ENCODE measurements at regions of chr1 and their contacts with region 1.

Region 1: GRCh38 chr1:193121616-193122593 is at the start of gene CDC73:
- DNase-seq: peak; percentile 97
- H3K4me3 ChIP-seq: peak within 1 kb of the TSS; percentile 77 to 96 (median 86)
- H3K27ac ChIP-seq: peak within 1 kb of the TSS; percentile 61
- H3K4me1 ChIP-seq: peaks cover 20% of the 10 kb centered on the region
- H3K27me3 ChIP-seq: no peaks in the 10 kb centered on the region
- CTCF ChIP-seq: peak; percentile 95 to 98
- POLR2A ChIP-seq: peak; percentile 70
- total RNA-seq, gene CDC73: 55.3 and 55.8 TPM in 2 replicates

Region 2: GRCh38 chr1:193059268-193060225 is 62.4 kb before region 1 on chr1 and contains the starts of genes RO60 and UCHL5:
- CTCF ChIA-PET with region 1: interaction called, 11 read pairs
- POLR2A ChIA-PET with region 1: no interaction called
- dilution Hi-C with region 1: no loop called
- intact Hi-C with region 1: loop called (anchors 1 kb)
- DNase-seq: peak; percentile 99
- H3K4me3 ChIP-seq: peak within 1 kb of the TSS; percentile 49 to 86 (median 78)
- H3K27ac ChIP-seq: peak within 1 kb of the TSS; percentile 65
- H3K4me1 ChIP-seq: peaks cover 29% of the 10 kb centered on the region
- H3K27me3 ChIP-seq: no peaks in the 10 kb centered on the region
- CTCF ChIP-seq: no peak
- POLR2A ChIP-seq: peak; percentile 85
- total RNA-seq, gene RO60: 60.3 and 61.8 TPM in 2 replicates
- total RNA-seq, gene UCHL5: 45.6 and 50.8 TPM in 2 replicates

Region 3: DNA sequence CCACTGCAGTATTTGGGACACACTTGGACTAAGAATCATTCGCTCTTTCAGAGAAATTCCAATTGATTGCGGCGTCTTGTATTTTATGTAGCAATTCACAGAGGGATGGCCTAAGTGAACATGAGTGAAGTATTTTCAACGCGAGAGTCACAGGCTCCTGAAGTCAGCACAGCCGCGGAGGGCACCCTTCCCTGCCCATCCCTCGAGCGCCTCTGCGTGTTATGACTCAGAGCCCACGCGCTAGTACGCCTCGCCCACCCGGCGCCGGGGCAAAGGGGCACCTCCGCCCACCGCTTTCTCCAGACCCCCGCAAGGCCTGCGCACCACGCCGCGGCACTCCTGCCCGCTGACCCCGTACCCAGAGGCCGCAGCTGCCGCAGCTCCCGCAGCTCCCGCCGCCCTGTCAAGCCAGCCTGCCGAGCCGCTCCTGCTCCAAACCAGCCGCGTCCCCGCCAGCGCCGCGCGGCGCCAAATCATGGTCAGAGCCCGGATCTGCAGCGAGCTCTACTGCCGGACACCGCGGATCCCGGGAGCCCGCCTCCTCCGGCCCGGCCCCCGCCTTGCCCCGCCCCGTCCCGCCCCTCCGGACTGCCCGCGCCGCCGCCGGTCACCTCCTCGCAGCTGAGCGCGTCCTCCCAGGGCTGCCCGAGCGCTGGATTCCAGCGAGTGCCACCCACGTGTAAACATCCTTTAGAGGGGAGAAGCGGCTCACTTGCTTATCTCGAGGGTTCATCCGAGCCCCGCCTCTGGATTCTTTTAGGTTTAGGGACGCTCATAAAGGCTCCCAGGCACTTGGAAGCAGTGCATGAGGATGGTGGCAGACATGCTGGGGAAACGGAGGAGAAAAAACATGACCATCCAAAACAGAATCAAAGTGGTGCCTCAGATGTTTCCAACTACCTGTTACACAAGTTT is 16.7 kb before region 1 on chr1 and contains the start of gene GLRX2:
- CTCF ChIA-PET with region 1: interaction called, 49 read pairs
- POLR2A ChIA-PET with region 1: interaction called, 4 read pairs
- dilution Hi-C with region 1: no loop called
- intact Hi-C with region 1: loop called (anchors 1 kb)
- DNase-seq: peak; percentile 90
- H3K4me3 ChIP-seq: peak within 1 kb of the TSS; percentile 58 to 96 (median 93)
- H3K27ac ChIP-seq: peak within 1 kb of the TSS; percentile 69
- H3K4me1 ChIP-seq: peaks cover 15% of the 10 kb centered on the region
- H3K27me3 ChIP-seq: no peaks in the 10 kb centered on the region
- CTCF ChIP-seq: no peak
- POLR2A ChIP-seq: peak; percentile 94
- total RNA-seq, gene GLRX2: 21.5 and 22.2 TPM in 2 replicates